Aorta (tissue), 5 donors: ENCODE measurements at regions of chr2 and their contacts with region 1.

Region 1: GRCh38 chr2:89845532-89845931 is 1154.1 kb downstream of the RPIA start:
- DNase-seq: peak in 1 of 2 donors; percentile 45
- ATAC-seq: no peak
- H3K4me3 ChIP-seq: no peak overlapping the region
- H3K27ac ChIP-seq: no peak overlapping the region
- H3K4me1 ChIP-seq: no peaks in the 10 kb centered on the region
- H3K27me3 ChIP-seq: no peaks in the 10 kb centered on the region

Region 2: GRCh38 chr2:89807673-89808072 is 37.9 kb before region 1 on chr2:
- intact Hi-C with region 1: loop called in 1 of 2 experiments (anchors 1 kb)
- DNase-seq: no peak
- ATAC-seq: no peak
- H3K4me3 ChIP-seq: no peak overlapping the region
- H3K27ac ChIP-seq: no peak overlapping the region
- H3K4me1 ChIP-seq: no peaks in the 10 kb centered on the region
- H3K27me3 ChIP-seq: no peaks in the 10 kb centered on the region